Activated naive CD8-positive, alpha-beta T cell treated with anti-CD3 and anti-CD28 coated beads, Interleukin-2, amount 10 ng/mL, durations not matched to agents 7 days and 5 days (primary cell): ENCODE measurements at regions of chr6 and their contacts with region 1.

Region 1: DNA sequence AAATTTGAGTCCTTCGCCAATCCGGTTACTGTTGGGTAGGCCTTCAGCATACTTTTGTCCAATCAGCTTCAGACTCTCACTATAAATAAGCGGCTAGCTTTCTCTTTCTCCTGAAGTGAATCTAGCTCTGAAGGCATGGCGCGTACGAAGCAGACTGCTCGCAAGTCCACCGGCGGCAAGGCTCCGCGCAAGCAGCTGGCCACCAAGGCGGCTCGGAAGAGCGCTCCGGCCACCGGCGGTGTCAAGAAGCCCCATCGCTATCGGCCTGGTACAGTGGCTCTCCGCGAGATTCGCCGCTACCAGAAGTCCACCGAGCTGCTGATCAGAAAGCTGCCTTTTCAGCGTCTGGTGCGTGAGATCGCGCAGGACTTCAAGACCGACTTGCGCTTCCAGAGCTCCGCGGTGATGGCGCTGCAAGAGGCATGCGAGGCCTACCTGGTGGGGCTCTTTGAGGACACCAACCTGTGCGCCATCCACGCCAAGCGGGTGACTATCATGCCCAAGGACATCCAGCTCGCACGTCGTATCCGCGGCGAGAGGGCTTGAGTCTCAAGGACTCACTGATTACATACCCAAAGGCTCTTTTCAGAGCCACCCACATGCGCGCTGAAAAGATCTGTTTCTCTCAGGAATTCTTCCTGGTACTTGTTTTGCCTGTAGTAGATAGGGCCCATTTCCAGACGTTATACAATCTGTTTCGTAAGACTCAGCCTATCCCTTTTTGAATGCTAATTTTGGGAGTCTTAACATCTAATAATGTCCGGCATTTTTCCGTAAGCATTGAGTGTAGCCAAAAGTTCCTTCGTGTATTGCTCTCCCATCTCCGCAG is 102.0 kb downstream of the OR2B2 start:
- DNase-seq: peak; percentile 83
- ATAC-seq: peak; percentile 38
- H3K4me3 Mint-ChIP-seq: peak overlapping the region; percentile 89
- H3K27ac Mint-ChIP-seq: peak overlapping the region; percentile 97
- H3K4me1 Mint-ChIP-seq: peaks cover 52% of the 10 kb centered on the region
- H3K27me3 Mint-ChIP-seq: no peaks in the 10 kb centered on the region

Region 2: DNA sequence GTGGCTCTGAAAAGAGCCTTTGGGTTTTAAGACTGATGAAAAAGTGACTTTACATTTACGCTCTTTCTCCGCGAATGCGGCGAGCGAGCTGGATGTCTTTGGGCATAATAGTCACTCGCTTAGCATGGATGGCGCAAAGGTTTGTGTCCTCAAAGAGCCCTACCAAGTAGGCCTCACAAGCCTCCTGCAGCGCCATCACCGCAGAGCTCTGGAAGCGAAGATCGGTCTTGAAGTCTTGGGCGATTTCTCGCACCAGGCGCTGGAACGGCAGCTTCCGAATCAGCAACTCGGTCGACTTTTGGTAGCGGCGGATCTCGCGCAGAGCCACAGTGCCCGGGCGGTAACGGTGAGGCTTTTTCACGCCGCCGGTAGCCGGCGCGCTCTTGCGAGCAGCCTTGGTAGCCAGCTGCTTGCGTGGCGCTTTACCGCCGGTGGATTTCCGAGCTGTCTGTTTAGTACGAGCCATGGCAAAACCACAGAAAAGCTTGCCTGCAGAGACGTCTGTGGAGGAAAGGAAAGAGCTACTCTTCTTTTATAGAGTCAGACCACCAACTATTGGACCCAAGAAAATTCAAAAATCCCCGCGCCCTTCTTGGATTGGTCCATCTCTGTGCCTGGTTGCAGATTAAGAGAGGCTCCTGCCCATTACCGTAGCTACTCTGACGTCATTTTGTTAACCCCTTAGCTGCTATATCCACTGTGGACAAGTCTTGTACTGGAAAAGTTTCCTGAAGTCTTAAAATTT is 1778.4 kb before region 1 on chr6:
- POLR2A ChIA-PET with region 1: interaction called, 81 read pairs
- DNase-seq: peak; percentile 84
- ATAC-seq: peak; percentile 66
- H3K4me3 Mint-ChIP-seq: peak overlapping the region; percentile 88
- H3K27ac Mint-ChIP-seq: peak overlapping the region; percentile 98
- H3K4me1 Mint-ChIP-seq: peaks cover 66% of the 10 kb centered on the region
- H3K27me3 Mint-ChIP-seq: peaks cover 3% of the 10 kb centered on the region

Region 3: GRCh38 chr6:26216356-26216885 is 1593.7 kb before region 1 on chr6:
- POLR2A ChIA-PET with region 1: interaction called, 16 read pairs
- DNase-seq: peak; percentile 77
- ATAC-seq: peak; percentile 75
- H3K4me3 Mint-ChIP-seq: no peak overlapping the region
- H3K27ac Mint-ChIP-seq: no peak overlapping the region
- H3K4me1 Mint-ChIP-seq: peaks cover 32% of the 10 kb centered on the region
- H3K27me3 Mint-ChIP-seq: no peaks in the 10 kb centered on the region

Region 4: DNA sequence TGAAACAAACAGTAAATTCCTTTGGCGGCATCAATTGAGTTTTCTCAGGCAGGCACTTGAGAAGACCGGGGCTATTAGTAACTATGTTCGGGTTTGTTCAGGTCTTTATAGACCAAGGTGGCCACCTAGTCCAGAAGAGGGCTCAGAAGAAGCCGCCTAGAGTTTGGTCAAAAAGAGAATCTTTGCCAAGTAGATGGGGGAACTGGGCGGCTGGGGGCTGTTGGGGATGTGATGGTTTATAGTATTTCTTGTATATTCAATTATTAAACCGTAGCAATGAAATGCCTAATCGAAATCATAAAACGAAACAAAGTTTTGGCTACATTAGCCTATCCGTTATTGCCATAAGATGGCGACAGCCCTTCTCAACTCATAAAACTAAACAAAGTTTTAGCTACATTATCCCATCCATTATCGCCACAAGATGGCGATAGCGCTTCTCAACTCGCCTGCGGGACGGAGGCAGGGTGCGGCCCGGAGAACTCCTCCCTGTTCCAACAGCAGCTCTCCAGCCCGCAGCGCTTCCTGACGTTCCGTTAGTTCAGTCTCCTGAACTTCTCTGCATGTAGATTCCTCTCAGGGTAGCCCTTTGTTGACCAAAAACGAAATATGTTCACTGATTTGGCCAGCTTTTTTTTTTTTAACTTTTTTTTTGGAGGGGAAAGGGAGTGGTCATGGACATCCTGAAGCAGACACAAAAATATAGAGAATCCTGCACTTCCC is 683.2 kb before region 1 on chr6:
- POLR2A ChIA-PET with region 1: interaction called, 323 read pairs
- DNase-seq: peak; percentile 73
- ATAC-seq: peak; percentile 71
- H3K4me3 Mint-ChIP-seq: peak overlapping the region; percentile 80
- H3K27ac Mint-ChIP-seq: peak overlapping the region; percentile 84
- H3K4me1 Mint-ChIP-seq: peaks cover 43% of the 10 kb centered on the region
- H3K27me3 Mint-ChIP-seq: no peaks in the 10 kb centered on the region

Region 5: DNA sequence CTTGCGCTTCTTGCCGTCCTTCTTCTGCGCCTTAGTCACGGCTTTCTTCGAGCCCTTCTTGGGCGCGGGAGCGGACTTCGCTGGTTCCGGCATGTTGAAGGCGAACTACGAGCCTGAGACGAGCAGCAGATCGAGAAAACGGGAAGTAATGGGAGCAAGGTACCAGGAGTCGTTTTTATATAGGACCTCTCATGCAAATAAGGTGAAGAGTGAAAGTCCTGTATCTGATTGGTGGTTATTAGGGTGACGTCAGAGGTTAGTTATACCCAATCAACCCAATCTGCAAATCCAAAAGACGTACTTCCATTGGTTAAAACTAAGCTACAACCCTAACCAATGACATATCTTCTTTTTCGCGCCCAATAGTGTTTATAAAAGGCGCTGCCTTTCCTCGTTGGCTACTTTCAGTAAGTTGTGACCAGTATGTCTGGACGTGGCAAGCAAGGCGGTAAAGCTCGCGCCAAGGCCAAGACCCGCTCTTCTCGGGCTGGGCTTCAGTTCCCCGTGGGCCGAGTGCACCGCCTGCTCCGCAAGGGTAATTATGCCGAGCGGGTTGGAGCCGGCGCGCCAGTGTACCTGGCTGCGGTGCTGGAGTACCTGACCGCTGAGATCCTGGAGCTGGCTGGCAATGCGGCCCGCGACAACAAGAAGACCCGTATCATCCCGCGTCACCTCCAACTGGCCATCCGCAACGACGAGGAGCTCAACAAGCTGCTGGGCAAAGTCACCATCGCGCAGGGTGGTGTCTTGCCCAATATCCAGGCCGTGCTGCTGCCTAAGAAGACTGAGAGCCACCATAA is 663.2 kb before region 1 on chr6:
- POLR2A ChIA-PET with region 1: interaction called, 413 read pairs
- DNase-seq: peak; percentile 83
- ATAC-seq: peak; percentile 71
- H3K4me3 Mint-ChIP-seq: no peak overlapping the region
- H3K27ac Mint-ChIP-seq: no peak overlapping the region
- H3K4me1 Mint-ChIP-seq: peaks cover 18% of the 10 kb centered on the region
- H3K27me3 Mint-ChIP-seq: no peaks in the 10 kb centered on the region

Region 6: GRCh38 chr6:27795697-27796494 is 14.3 kb before region 1 on chr6:
- POLR2A ChIA-PET with region 1: interaction called, 44 read pairs
- DNase-seq: no peak
- ATAC-seq: peak; percentile 50
- H3K4me3 Mint-ChIP-seq: no peak overlapping the region
- H3K27ac Mint-ChIP-seq: peak overlapping the region; percentile 2
- H3K4me1 Mint-ChIP-seq: peaks cover 38% of the 10 kb centered on the region
- H3K27me3 Mint-ChIP-seq: peaks cover 19% of the 10 kb centered on the region

Region 7: DNA sequence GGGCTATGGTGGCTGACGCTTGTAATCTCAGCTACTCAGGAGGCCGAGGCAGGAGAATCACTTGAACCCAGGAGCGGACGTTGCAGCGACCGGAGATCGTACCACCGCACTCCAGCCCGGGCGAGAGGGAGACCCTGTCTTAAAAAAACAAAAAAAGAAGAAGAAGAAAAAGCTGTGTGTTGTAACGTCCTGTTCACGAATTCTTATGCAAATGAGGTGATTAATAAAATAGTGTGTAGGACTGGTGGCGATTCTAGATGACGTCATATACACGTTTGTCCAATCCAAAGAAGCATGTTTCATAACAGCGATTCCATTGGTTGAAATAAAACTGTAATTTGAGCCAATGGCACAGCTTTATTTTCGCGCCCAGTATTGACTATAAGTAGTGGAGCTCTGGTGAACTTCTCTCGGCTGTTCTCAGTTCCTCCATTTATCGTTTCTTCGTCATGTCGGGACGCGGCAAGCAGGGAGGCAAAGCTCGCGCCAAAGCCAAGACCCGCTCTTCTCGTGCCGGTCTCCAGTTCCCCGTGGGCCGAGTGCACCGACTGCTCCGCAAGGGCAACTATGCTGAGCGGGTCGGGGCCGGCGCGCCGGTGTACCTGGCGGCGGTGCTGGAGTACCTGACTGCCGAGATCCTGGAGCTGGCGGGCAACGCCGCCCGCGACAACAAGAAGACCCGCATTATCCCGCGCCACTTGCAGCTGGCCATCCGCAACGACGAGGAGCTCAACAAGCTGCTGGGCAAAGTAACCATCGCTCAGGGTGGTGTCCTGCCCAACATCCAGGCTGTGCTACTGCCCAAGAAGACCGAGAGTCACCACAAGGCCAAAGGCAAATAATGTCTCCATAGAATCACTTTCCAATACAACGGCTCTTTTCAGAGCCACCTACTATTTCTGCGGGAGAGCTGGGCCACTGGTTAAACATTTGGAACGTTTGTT is 55.0 kb after region 1 on chr6:
- POLR2A ChIA-PET with region 1: interaction called, 907 read pairs
- DNase-seq: peak; percentile 83
- ATAC-seq: peak; percentile 56
- H3K4me3 Mint-ChIP-seq: peak overlapping the region; percentile 99
- H3K27ac Mint-ChIP-seq: peak overlapping the region; percentile 100
- H3K4me1 Mint-ChIP-seq: peaks cover 57% of the 10 kb centered on the region
- H3K27me3 Mint-ChIP-seq: no peaks in the 10 kb centered on the region